Mammary epithelial cell (primary cell): ENCODE measurements at regions of chr3 and their contacts with region 1.

Region 1: DNA sequence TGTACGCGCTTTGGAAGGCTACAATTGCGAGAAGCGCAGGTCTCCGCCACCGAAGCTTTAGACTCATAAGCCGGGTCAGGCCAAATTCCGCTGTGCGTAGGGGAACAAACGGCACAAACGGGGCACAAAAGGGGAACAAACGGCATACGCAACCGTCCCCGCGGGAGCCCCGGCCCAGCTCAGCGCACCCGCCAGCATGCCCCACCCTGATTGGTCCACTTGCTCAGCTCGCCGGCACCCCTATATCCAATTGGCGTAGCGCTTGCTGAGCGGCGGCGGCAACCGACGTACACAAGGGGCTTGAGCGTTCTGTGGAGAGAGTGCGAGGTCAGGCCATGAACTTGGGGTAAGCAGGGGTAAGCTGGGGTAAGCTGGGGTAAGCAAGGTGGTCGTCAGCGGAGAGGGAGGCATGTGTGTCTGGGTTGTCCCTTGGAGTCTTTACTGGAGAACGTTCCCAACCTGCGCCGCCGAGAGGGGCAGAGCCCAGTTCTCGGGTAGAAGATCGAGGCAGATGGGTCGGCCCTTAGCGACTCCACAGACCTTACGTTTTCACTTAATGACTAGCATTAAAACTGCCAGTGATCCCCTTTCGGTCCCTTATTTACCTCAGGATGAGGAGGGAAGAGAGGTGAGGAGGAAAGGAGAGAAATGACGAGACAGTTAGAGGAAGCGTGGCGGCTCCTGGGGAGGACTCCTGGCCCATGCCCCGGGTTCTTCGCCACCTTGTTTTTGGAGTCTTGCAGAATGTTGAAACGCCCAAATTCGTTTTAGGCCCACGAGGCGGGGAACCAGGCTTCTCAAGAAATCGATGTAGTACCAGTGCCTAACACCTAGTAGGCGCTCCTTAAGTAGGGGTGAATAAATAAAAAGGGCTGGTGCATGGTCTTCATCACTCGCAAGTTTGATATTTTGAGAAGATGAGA is at the start of gene CCDC66:
- DNase-seq: peak; percentile 89
- H3K4me3 ChIP-seq: peak within 1 kb of the TSS; percentile 71 to 92 (median 79)
- H3K27ac ChIP-seq: peak within 1 kb of the TSS; percentile 88
- H3K4me1 ChIP-seq: no peaks in the 10 kb centered on the region
- H3K27me3 ChIP-seq: no peaks in the 10 kb centered on the region
- CTCF ChIP-seq: peak; percentile 63 to 76
- total RNA-seq, gene CCDC66: 19.6 to 20.7 TPM

Region 2: GRCh38 chr3:56988458-56989168 is 431.4 kb after region 1 on chr3:
- CTCF ChIA-PET with region 1: no interaction called
- dilution Hi-C with region 1: no loop called
- in situ Hi-C with region 1: no loop called
- intact Hi-C with region 1: loop called (anchors 10 kb)
- DNase-seq: peak; percentile 59
- H3K4me3 ChIP-seq: no peak overlapping the region
- H3K27ac ChIP-seq: no peak overlapping the region
- H3K4me1 ChIP-seq: no peaks in the 10 kb centered on the region
- H3K27me3 ChIP-seq: no peaks in the 10 kb centered on the region
- CTCF ChIP-seq: peak; percentile 46 to 70